ENCODE measurements at regions of chr6 and their contacts with region 1.

Region 1: GRCh38 chr6:156776840-156777576 is at the start of gene ARID1B:
- DNase-seq: peak; percentile 67 to 86 (median 80)
- ATAC-seq: peak; percentile 74
- H3K4me3 ChIP-seq: peak within 1 kb of the TSS; percentile 79
- H3K4me3 Mint-ChIP-seq: peak within 1 kb of the TSS; percentile 87 to 100 (median 96)
- H3K27ac ChIP-seq: peak within 1 kb of the TSS; percentile 81
- H3K27ac Mint-ChIP-seq: peak within 1 kb of the TSS; percentile 94 to 99 (median 99)
- H3K4me1 ChIP-seq: peaks cover 4 to 10% of the 10 kb centered on the region in 2 donors
- H3K4me1 Mint-ChIP-seq: peaks cover 11 to 44% (median 38%) of the 10 kb centered on the region in 7 donors
- H3K27me3 ChIP-seq: no peaks in the 10 kb centered on the region
- H3K27me3 Mint-ChIP-seq: peaks cover 0 to 4% (median 0%) of the 10 kb centered on the region in 5 donors
- total RNA-seq, gene ARID1B: 88.8 to 164 (median 141) TPM

Region 2: GRCh38 chr6:155174576-155175211 is 1602.3 kb before region 1 on chr6:
- CTCF ChIA-PET with region 1: no interaction called
- POLR2A ChIA-PET with region 1: no interaction called
- intact Hi-C with region 1: loop called in 1 of 2 experiments (anchors 2 kb)
- DNase-seq: peak in 8 of 9 donors; percentile 38 to 63 (median 54)
- ATAC-seq: peak; percentile 79
- H3K4me3 ChIP-seq: no peak overlapping the region
- H3K4me3 Mint-ChIP-seq: peak overlapping the region in 1 of 10 donors; percentile 19
- H3K27ac ChIP-seq: no peak overlapping the region
- H3K27ac Mint-ChIP-seq: peak overlapping the region in 2 of 9 donors; percentile 0 to 69
- H3K4me1 ChIP-seq: peaks cover 8 to 18% of the 10 kb centered on the region in 2 donors
- H3K4me1 Mint-ChIP-seq: peaks cover 8 to 44% (median 22%) of the 10 kb centered on the region in 7 donors
- H3K27me3 ChIP-seq: no peaks in the 10 kb centered on the region
- H3K27me3 Mint-ChIP-seq: no peaks in the 10 kb centered on the region

Region 3: DNA sequence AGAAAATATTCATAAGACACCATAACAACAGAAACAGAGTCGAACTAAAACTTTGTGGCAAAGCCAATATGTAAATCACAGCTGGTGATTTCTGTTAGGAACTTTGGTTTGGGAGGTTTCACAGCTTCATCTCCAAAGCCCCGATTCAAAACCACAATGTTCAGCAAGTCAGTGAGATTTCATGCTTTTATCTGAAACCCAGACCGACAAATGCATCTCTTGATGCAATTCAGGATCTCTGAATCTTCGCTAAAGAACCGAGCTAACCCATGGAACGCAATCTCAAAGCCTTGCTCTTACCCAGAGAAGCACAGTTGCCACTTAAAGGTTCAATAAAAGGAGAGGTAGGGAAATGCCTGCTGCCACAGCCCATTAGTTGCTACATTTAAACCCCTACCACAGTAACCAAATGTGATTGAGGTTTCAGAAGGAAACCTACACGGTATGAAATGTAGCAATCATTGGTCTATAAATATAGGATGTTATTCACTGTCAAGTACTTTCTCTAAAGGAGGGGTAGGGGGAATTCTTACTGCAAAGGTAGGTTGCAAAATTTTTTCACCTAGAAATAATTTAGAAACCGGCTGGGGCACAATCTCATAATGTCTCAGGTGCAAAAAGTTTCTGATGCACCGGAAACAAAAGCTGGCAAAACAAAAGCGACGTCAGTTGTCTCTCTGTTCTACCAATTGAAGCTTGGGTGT is 380.8 kb before region 1 on chr6:
- CTCF ChIA-PET with region 1: no interaction called
- POLR2A ChIA-PET with region 1: interaction called, 22 read pairs
- intact Hi-C with region 1: loop called in 1 of 2 experiments (anchors 1 kb)
- DNase-seq: peak in 7 of 9 donors; percentile 67 to 85 (median 77)
- ATAC-seq: peak; percentile 85
- H3K4me3 ChIP-seq: peak overlapping the region; percentile 14
- H3K4me3 Mint-ChIP-seq: peak overlapping the region; percentile 49 to 95 (median 84)
- H3K27ac ChIP-seq: peak overlapping the region; percentile 85
- H3K27ac Mint-ChIP-seq: peak overlapping the region; percentile 60 to 100 (median 99)
- H3K4me1 ChIP-seq: peaks cover 16 to 67% of the 10 kb centered on the region in 2 donors
- H3K4me1 Mint-ChIP-seq: peaks cover 17 to 99% (median 89%) of the 10 kb centered on the region in 7 donors
- H3K27me3 ChIP-seq: no peaks in the 10 kb centered on the region
- H3K27me3 Mint-ChIP-seq: peaks cover 0 to 40% (median 0%) of the 10 kb centered on the region in 5 donors

Region 4: GRCh38 chr6:156791320-156791850 is 14.4 kb after region 1 on chr6:
- CTCF ChIA-PET with region 1: interaction called, 3 read pairs
- POLR2A ChIA-PET with region 1: interaction called, 16 read pairs
- intact Hi-C with region 1: loop called in 1 of 2 experiments (anchors 1 kb)
- DNase-seq: peak in 7 of 9 donors; percentile 48 to 84 (median 69)
- ATAC-seq: peak; percentile 81
- H3K4me3 ChIP-seq: no peak overlapping the region
- H3K4me3 Mint-ChIP-seq: peak overlapping the region in 9 of 10 donors; percentile 42 to 76 (median 55)
- H3K27ac ChIP-seq: no peak overlapping the region
- H3K27ac Mint-ChIP-seq: peak overlapping the region in 8 of 9 donors; percentile 3 to 82 (median 62)
- H3K4me1 ChIP-seq: peaks cover 27 to 55% of the 10 kb centered on the region in 2 donors
- H3K4me1 Mint-ChIP-seq: peaks cover 51 to 99% (median 94%) of the 10 kb centered on the region in 7 donors
- H3K27me3 ChIP-seq: no peaks in the 10 kb centered on the region
- H3K27me3 Mint-ChIP-seq: no peaks in the 10 kb centered on the region

Region 5: GRCh38 chr6:156953479-156954146 is 176.6 kb after region 1 on chr6:
- CTCF ChIA-PET with region 1: no interaction called
- POLR2A ChIA-PET with region 1: no interaction called
- intact Hi-C with region 1: loop called in 1 of 2 experiments (anchors 1 kb)
- DNase-seq: peak in 7 of 9 donors; percentile 67 to 85 (median 82)
- ATAC-seq: peak; percentile 95
- H3K4me3 ChIP-seq: no peak overlapping the region
- H3K4me3 Mint-ChIP-seq: peak overlapping the region in 5 of 10 donors; percentile 10 to 51 (median 37)
- H3K27ac ChIP-seq: no peak overlapping the region
- H3K27ac Mint-ChIP-seq: peak overlapping the region in 8 of 9 donors; percentile 27 to 83 (median 51)
- H3K4me1 ChIP-seq: peaks cover 15 to 20% of the 10 kb centered on the region in 2 donors
- H3K4me1 Mint-ChIP-seq: peaks cover 41 to 84% (median 77%) of the 10 kb centered on the region in 7 donors
- H3K27me3 ChIP-seq: no peaks in the 10 kb centered on the region
- H3K27me3 Mint-ChIP-seq: no peaks in the 10 kb centered on the region

Region 6: GRCh38 chr6:157274471-157275226 is 497.6 kb after region 1 on chr6:
- CTCF ChIA-PET with region 1: no interaction called
- POLR2A ChIA-PET with region 1: no interaction called
- intact Hi-C with region 1: loop called (anchors 1 kb)
- DNase-seq: peak; percentile 72 to 94 (median 88)
- ATAC-seq: peak; percentile 95
- H3K4me3 ChIP-seq: peak overlapping the region; percentile 80
- H3K4me3 Mint-ChIP-seq: peak overlapping the region; percentile 83 to 96 (median 92)
- H3K27ac ChIP-seq: peak overlapping the region; percentile 93
- H3K27ac Mint-ChIP-seq: peak overlapping the region; percentile 89 to 98 (median 92)
- H3K4me1 ChIP-seq: peaks cover 6 to 7% of the 10 kb centered on the region in 2 donors
- H3K4me1 Mint-ChIP-seq: peaks cover 0 to 10% (median 8%) of the 10 kb centered on the region in 7 donors
- H3K27me3 ChIP-seq: no peaks in the 10 kb centered on the region
- H3K27me3 Mint-ChIP-seq: peaks cover 0 to 15% (median 0%) of the 10 kb centered on the region in 5 donors

Measured in naive thymus-derived CD4-positive, alpha-beta T cell (primary cell).